Right ventricle myocardium inferior (tissue), 1 donor: ENCODE measurements at regions of chr6 and their contacts with region 1.

Region 1: GRCh38 chr6:128655978-128656498 is 135.6 kb upstream of the PTPRK start:
- DNase-seq: no peak
- ATAC-seq: no peak

Region 2: DNA sequence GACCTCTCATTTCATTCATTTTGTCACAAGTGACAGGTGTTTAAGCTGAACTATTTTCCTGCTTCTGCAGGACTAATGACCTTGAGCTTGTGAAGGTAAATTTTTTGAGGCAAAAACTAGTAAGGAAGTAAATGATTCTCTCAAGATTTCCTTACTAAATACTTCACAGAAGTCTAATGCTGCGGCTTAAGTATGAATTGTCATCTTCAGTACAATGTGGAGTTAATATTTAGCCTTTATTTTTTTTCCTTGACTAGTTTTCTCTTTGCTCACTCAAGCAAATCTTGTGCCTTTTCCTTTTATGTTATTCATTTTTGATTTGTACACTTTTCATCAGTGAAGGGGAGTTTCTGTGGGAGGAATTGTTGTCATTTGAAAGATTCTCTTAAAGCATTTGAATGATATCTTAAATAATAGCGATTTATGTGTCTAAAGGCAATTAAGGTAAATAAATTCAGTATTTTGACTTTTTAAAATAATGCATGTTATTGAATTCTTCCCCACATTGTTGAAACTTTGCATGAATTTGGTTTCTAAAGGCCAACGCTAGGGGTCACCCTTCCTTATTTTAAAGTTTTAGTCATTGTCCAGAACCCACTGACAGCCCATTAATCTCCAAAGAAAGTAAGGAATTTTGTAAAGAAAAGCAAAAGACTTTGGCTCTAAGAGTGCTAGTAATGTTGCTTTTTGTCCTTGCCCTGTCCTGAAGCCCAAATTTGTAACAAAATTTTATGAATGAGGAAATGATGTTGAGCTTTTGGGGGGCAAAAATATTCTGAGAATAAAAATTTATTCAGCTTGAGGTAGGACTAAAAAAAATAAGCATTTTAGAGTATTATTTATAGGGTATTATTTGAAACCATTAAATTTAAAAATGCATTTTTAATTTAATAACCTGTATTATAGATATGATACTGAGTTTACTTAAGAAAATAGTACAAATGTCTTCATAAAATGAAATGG is 69.5 kb after region 1 on chr6:
- intact Hi-C with region 1: loop called (anchors 5 kb)
- DNase-seq: no peak
- ATAC-seq: no peak